ENCODE measurements at regions of chr11 and their contacts with region 1.

Region 1: GRCh38 chr11:33869481-33870422 is 22.1 kb downstream of the LMO2 start:
- DNase-seq: peak; percentile 62 to 63
- ATAC-seq: peak; percentile 71 to 90 (median 88)
- H3K4me3 ChIP-seq: peak overlapping the region; percentile 44 to 92 (median 72)
- H3K27ac ChIP-seq: peak overlapping the region; percentile 57 to 94 (median 87)
- H3K4me1 ChIP-seq: peaks cover 0 to 69% (median 25%) of the 10 kb centered on the region in 9 donors
- H3K27me3 ChIP-seq: peaks cover 0 to 29% (median 4%) of the 10 kb centered on the region in 7 donors
- CTCF ChIP-seq: no peak

Region 2: DNA sequence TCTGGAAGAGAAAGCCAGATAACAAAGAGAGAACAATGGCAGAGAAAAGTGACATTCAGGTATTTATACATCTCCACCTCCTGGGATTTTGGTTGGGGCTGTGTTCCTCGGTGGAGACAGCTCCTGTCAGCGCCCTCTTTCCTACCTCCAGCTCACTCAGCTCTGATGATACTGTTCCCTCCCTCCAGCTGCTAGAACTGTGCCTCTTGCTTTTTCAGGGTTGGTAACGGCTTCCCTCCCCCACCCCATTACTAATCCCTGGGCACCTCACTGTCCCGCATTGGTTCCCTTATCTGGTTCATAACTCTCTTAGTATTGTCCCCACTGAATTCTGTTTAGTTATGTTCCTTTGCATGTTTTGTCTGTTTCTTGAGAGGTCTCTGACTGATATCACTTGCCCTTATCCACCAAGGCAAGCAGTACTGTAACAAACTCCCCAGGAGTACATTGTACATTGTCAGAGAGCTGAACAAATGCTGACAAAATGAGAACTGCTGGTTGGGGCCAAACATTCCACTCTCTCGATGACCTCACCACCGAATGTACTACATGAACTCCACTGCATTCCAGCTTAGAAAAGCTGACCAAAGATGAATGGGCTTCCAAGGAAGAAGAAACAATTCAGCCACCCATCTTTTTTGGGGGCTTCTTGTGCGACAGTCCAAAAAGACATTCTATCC is 89.8 kb before region 1 on chr11:
- intact Hi-C with region 1: no loop called
- DNase-seq: no peak
- ATAC-seq: peak; percentile 40 to 85 (median 65)
- H3K4me3 ChIP-seq: no peak overlapping the region
- H3K27ac ChIP-seq: peak overlapping the region in 4 of 10 donors; percentile 29 to 60 (median 48)
- H3K4me1 ChIP-seq: peaks cover 0 to 44% (median 22%) of the 10 kb centered on the region in 9 donors
- H3K27me3 ChIP-seq: peaks cover 0 to 19% (median 0%) of the 10 kb centered on the region in 7 donors
- CTCF ChIP-seq: no peak

Region 3: GRCh38 chr11:33802414-33802950 is 67.3 kb before region 1 on chr11:
- intact Hi-C with region 1: no loop called
- DNase-seq: peak; percentile 25 to 46
- ATAC-seq: peak; percentile 81 to 93 (median 90)
- H3K4me3 ChIP-seq: peak overlapping the region in 8 of 10 donors; percentile 24 to 50 (median 34)
- H3K27ac ChIP-seq: no peak overlapping the region
- H3K4me1 ChIP-seq: peaks cover 0 to 15% (median 8%) of the 10 kb centered on the region in 9 donors
- H3K27me3 ChIP-seq: peaks cover 4 to 61% (median 50%) of the 10 kb centered on the region in 7 donors
- CTCF ChIP-seq: no peak

Region 4: GRCh38 chr11:33936725-33937604 is 67.2 kb after region 1 on chr11:
- intact Hi-C with region 1: loop called in 4 of 10 experiments (anchors 2 to 5 kb)
- DNase-seq: peak; percentile 53 to 82
- ATAC-seq: peak; percentile 65 to 87 (median 82)
- H3K4me3 ChIP-seq: peak overlapping the region in 1 of 10 donors; percentile 15
- H3K27ac ChIP-seq: peak overlapping the region in 9 of 10 donors; percentile 24 to 66 (median 51)
- H3K4me1 ChIP-seq: peaks cover 11 to 71% (median 57%) of the 10 kb centered on the region in 9 donors
- H3K27me3 ChIP-seq: no peaks in the 10 kb centered on the region
- CTCF ChIP-seq: no peak

Region 5: DNA sequence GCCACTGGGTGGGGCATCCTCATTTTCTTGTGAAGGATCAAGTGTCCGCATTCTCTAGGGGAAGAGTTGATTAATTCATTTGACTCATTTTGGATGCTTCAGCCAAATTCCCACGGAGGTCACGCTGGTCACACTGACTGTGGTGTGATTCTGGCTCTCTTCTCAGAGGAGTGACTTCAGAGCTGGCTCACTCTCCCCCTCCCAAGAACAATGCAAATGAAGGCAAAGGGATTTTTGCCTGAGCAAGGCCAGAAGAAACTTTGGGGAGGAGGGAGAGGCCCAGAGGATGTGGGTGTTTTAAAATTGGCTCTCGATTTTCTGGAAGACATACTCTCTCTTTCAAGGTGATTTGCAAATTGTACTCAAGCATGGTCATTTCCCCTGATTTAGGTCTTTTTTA is 73.2 kb after region 1 on chr11:
- intact Hi-C with region 1: loop called in 3 of 10 experiments (anchors 5 kb)
- DNase-seq: peak in 1 of 2 donors; percentile 58
- ATAC-seq: peak; percentile 46 to 85 (median 78)
- H3K4me3 ChIP-seq: no peak overlapping the region
- H3K27ac ChIP-seq: peak overlapping the region in 4 of 10 donors; percentile 27 to 79 (median 58)
- H3K4me1 ChIP-seq: peaks cover 6 to 38% (median 29%) of the 10 kb centered on the region in 9 donors
- H3K27me3 ChIP-seq: no peaks in the 10 kb centered on the region
- CTCF ChIP-seq: no peak